Posterior vena cava (tissue), 2 donors: ENCODE measurements at regions of chr10 and their contacts with region 1.

Region 1: DNA sequence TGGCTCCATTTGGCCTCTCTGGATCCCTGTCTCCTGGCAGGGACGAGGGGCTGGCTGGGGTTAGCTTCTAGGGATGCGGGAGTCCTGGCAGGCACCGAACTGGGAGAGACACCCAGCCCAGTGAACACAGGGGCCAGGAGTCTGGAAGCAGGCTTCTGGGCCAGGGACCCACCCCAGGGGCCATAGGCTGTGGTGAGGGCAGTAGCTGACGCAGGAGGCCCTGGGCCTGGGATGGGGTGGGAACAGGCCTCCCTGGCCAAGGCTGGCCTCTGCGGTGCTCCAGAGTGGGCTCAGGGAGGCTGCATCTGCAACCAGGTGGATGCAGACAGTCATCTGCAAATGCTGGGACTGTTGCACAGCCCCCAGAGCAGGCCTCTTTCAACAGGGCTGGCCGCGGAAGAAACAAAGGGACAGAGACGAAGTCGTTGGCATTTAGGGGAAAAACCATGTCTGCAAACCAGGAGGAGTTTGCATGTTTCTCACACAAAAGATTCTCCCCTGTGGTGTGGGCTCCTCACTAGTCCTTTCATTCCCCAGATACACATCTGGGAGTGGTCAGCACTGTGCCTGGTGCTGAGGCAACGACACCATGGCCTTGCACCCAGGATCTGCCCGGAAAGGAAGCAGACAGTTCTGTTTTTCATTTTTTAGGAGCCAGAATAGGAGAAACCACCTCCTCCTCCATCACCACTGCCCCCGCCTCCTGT is 36.4 kb upstream of the ZNF488 start:
- DNase-seq: peak; percentile 74

Region 2: DNA sequence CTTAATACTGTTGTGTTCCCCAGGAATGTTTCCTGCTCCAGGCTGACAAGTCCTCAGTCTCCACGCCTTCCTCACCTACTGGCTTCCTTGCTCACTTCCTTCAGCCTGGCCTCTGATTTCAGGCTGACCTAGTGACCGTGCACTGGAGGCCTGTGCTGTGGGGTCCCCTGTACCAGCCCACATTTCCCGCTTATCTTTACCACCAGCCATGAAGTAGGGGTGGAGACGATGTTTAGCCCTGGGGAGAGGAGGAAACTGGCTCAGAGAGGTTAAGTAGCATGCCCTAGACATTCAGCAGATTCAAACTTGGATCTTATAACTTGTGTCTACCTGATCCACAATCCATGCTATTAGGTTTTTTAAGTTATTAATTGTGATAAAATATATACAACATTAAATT is 31.6 kb before region 1 on chr10:
- intact Hi-C with region 1: loop called in 1 of 2 experiments (anchors 1 kb)
- DNase-seq: no peak